Vagina (tissue), 2 donors: ENCODE measurements at regions of chr5 and their contacts with region 1.

Region 1: GRCh38 chr5:177497292-177498033 is at the start of gene PDLIM7:
- DNase-seq: peak in 1 of 2 donors; percentile 98
- H3K4me3 ChIP-seq: peak within 1 kb of the TSS; percentile 73 to 91
- H3K27ac ChIP-seq: peak within 1 kb of the TSS; percentile 85
- H3K4me1 ChIP-seq: peaks cover 53% of the 10 kb centered on the region
- H3K27me3 ChIP-seq: no peaks in the 10 kb centered on the region
- CTCF ChIP-seq: peak in 1 of 3 experiments; percentile 24
- POLR2A ChIP-seq: peak; percentile 9 to 91
- total RNA-seq, gene PDLIM7: 118 TPM

Region 2: DNA sequence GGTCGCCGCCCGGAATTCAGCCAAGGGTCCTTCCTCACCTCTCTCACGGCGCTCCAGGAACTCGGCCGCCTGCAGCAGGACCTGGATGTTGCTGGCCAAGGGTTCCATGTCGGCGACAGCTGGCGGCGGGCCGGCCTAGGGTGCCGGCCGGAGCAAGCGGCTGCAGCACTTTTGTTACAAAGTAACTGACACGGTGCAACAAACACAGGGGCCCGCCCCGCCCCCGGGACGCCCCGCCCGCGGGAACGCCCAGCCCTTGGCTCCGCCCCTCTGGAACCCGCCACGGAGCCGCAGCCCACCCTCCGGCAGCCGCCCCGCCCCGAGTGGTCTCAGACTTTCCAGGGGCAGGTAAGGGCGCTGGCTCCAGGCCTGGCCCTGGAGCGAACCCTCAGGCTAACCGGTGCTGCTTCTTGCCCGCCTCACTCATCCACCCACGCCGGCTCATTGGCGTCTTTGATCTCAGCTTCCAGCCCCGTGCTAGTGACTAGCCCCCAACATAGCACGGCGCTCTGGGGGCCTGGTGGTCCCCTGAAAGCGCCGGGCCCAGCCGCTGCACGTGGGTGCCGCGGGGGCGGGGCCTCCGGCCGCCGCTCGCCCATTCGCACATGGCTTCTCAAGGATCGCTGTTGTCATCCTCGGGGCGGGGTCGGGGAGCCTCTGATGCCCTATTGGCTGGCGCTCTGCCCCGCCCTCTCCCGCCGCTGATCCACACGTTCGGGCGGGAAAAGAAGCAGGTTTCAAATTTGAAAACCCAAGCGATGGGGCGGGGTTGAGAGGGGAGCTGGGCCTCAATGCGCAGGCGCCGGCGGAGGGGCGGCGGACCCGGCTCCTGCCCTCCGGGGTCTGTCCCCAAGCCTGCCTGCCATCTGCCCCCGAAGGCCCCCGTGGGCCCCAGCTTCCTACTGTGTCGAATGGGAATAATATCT is 185.5 kb before region 1 on chr5 and contains the start of gene MXD3:
- intact Hi-C with region 1: loop called (anchors 2 kb)
- DNase-seq: no peak
- H3K4me3 ChIP-seq: peak within 1 kb of the TSS; percentile 44 to 48
- H3K27ac ChIP-seq: no peak within 1 kb of the TSS
- H3K4me1 ChIP-seq: peaks cover 25% of the 10 kb centered on the region
- H3K27me3 ChIP-seq: no peaks in the 10 kb centered on the region
- CTCF ChIP-seq: no peak
- POLR2A ChIP-seq: no peak
- total RNA-seq, gene MXD3: 5.4 TPM

Region 3: GRCh38 chr5:177390363-177391300 is 106.8 kb before region 1 on chr5:
- intact Hi-C with region 1: loop called (anchors 2 kb)
- DNase-seq: no peak
- H3K4me3 ChIP-seq: no peak overlapping the region
- H3K27ac ChIP-seq: peak overlapping the region; percentile 37
- H3K4me1 ChIP-seq: peaks cover 37% of the 10 kb centered on the region
- H3K27me3 ChIP-seq: no peaks in the 10 kb centered on the region
- CTCF ChIP-seq: peak; percentile 87 to 96 (median 92)
- POLR2A ChIP-seq: no peak

Region 4: DNA sequence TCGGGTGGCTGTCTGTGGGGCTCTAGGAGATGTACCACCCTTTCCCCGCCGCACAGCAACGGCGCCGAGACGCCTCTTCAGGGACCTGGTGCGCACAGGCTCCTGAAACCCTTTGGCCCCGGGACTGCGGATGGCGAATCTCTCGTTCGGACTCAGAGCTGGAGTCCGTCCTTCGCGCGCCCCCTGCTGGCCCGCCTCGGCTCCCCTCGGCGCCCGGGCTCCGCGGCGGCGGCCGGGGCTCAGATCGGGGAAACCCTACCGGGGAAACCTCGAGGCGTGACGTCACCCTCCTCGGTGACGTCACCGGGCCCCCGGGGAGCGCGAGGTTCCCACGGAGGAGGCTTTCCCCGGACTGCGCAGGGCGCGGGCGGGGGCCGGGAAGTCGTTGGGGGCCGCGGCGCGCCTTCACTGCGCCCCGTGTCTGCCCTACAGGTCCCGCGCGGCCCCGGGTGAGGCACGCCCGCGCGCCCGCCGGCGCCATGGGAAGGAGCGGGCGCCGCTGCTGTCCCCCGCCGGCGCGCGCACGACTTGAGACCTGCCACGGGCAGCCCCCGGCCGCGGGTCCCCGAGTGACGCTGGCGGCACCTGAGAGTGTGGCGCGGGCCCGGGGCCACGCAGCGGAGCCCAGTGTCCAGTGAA is 42.9 kb before region 1 on chr5:
- intact Hi-C with region 1: loop called (anchors 5 kb)
- DNase-seq: no peak
- H3K4me3 ChIP-seq: peak overlapping the region; percentile 63 to 81
- H3K27ac ChIP-seq: peak overlapping the region; percentile 74
- H3K4me1 ChIP-seq: peaks cover 46% of the 10 kb centered on the region
- H3K27me3 ChIP-seq: no peaks in the 10 kb centered on the region
- CTCF ChIP-seq: peak; percentile 93 to 95 (median 95)
- POLR2A ChIP-seq: no peak

Region 5: GRCh38 chr5:177473461-177474001 is 23.9 kb before region 1 on chr5 and contains the start of gene DBN1:
- intact Hi-C with region 1: loop called (anchors 2 kb)
- DNase-seq: no peak
- H3K4me3 ChIP-seq: peak within 1 kb of the TSS; percentile 67 to 74
- H3K27ac ChIP-seq: peak within 1 kb of the TSS; percentile 83
- H3K4me1 ChIP-seq: peaks cover 77% of the 10 kb centered on the region
- H3K27me3 ChIP-seq: no peaks in the 10 kb centered on the region
- CTCF ChIP-seq: no peak
- POLR2A ChIP-seq: no peak
- total RNA-seq, gene DBN1: 69.0 TPM

Region 6: GRCh38 chr5:177554474-177555111 is 57.1 kb after region 1 on chr5 and contains the start of gene FAM193B:
- intact Hi-C with region 1: no loop called
- DNase-seq: no peak
- H3K4me3 ChIP-seq: peak within 1 kb of the TSS; percentile 92 to 93
- H3K27ac ChIP-seq: peak within 1 kb of the TSS; percentile 86
- H3K4me1 ChIP-seq: peaks cover 37% of the 10 kb centered on the region
- H3K27me3 ChIP-seq: no peaks in the 10 kb centered on the region
- CTCF ChIP-seq: no peak
- POLR2A ChIP-seq: no peak
- total RNA-seq, gene FAM193B: 72.4 TPM